IMR-90 (cell line): ENCODE measurements at regions of chrX and their contacts with region 1.

Region 1: DNA sequence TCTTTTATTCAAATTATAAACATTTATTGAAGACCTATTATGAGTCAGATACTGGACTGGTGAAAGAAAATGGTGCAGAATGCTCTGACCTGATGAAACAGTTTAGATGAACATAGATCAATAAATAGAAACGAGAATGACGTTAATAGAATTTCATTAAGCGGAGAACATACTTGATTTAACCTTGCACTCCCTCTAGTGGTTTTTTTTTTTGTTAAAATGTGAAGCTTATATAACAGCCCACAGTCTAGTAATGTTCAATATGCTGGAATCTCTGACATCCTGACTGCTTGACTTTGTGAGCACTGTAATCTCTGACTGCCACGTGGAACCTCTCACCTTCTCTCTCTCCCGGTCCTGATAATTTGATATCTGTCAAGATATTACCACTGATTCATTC is 32.3 kb downstream of the HDAC8 start:
- DNase-seq: peak; percentile 58
- ATAC-seq: peak; percentile 75
- H3K4me3 ChIP-seq: no peak overlapping the region
- H3K27ac ChIP-seq: no peak overlapping the region
- H3K4me1 ChIP-seq: no peaks in the 10 kb centered on the region
- H3K27me3 ChIP-seq: peaks cover 7% of the 10 kb centered on the region; the same call in 1 of the 2 replicates
- CTCF ChIP-seq: peak; percentile 46
- POLR2A ChIP-seq: no peak
- RAD21 ChIP-seq: peak; percentile 42

Region 2: DNA sequence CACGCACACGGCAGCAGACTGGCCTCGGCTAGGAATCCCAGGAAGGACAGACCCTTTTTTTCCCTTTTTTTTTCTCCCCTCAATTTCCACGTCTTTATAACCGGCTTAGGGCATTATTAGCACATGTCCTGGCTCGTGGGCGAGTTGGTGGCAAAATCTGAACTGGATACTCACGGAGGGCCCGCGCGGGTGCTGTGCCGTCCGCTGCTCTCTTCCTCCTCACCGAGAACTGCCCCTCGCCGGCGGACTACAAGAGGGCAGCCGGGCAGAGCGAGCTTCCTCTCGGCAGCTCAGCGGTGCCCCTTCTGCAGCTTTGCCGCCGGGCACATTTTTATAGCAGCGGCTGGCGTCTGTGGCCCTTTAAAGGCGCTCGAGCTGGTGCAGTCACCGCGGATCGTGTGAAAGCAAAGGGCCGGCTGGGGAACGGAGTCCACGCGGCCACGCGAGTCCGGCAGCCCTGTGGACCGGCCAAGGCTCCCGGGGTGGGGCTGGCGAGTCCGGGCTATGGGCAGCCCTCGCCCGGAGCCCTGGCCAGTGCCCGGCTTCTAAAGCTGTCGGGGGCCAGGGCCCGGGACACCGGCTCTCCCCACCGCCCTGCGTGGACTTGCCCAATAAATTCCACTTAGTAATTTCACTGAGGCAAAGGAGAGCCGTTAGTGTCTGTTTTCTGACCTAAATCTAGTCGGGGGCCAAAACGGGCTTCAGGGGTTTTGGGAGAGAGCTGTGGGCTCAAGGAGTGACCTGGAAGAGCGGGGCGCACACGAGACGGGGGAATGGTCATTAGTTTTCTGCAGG is 233.3 kb before region 1 on chrX:
- CTCF ChIA-PET with region 1: no interaction called
- POLR2A ChIA-PET with region 1: no interaction called
- dilution Hi-C with region 1: no loop called
- in situ Hi-C with region 1: no loop called
- intact Hi-C with region 1: loop called (anchors 5 kb)
- DNase-seq: peak; percentile 66
- ATAC-seq: peak; percentile 78
- H3K4me3 ChIP-seq: peak overlapping the region; percentile 65
- H3K27ac ChIP-seq: no peak overlapping the region
- H3K4me1 ChIP-seq: peaks cover 4% of the 10 kb centered on the region; the same call in 1 of the 2 replicates
- H3K27me3 ChIP-seq: peaks cover 77% of the 10 kb centered on the region
- CTCF ChIP-seq: no peak
- POLR2A ChIP-seq: no peak
- RAD21 ChIP-seq: no peak